ENCODE measurements at regions of chr5 and their contacts with region 1.

Region 1: DNA sequence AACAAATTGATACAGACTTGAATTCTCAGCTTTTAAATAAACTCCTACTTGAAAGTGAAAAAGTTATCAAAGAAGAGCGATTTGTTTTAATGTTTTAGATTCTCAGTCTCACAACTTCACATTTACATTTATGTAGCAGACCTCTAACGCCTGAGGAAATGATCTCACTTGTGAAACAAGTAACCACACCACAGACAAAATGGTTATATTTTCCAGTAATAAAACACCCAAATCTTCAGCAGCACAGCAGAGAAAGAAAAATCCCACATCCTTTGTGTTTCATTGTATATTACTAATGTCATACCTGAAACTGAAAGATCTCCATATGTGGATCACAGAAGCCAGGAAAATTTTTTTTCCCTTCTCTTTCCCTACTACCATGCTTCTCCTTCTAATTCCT is 29.8 kb upstream of the GZMA start:
- DNase-seq: no peak
- H3K4me3 Mint-ChIP-seq: no peak overlapping the region
- H3K27ac Mint-ChIP-seq: peak overlapping the region; percentile 34
- H3K4me1 Mint-ChIP-seq: peaks cover 33% of the 10 kb centered on the region
- H3K27me3 Mint-ChIP-seq: no peaks in the 10 kb centered on the region

Region 2: GRCh38 chr5:54310433-54311175 is 762.1 kb before region 1 on chr5 and contains the start of gene ARL15:
- CTCF ChIA-PET with region 1: no interaction called
- intact Hi-C with region 1: no loop called
- DNase-seq: peak; percentile 98
- H3K4me3 Mint-ChIP-seq: peak within 1 kb of the TSS; percentile 89
- H3K27ac Mint-ChIP-seq: peak within 1 kb of the TSS; percentile 84
- H3K4me1 Mint-ChIP-seq: peaks cover 24% of the 10 kb centered on the region
- H3K27me3 Mint-ChIP-seq: no peaks in the 10 kb centered on the region
- total RNA-seq, gene ARL15: 6.7 to 7.0 TPM

Region 3: DNA sequence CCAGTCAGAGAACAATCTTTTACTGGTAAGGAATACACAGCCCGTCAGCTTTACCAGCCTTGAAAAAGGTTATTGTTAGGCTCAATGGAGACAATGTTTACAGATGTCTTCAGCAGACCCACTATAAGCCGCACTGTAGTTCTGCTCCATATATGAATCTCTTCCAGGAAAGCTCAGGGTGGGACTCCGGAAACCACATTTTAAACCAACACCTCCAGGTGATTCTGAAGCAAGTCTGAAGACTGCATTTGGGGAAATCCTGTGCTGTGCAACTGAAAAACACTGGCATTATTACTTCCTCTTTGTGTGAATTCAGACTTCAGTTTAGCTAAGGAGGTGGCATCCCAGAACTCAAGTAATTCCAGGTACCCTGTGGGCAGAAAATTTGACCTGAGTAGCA is 45.1 kb before region 1 on chr5:
- CTCF ChIA-PET with region 1: no interaction called
- intact Hi-C with region 1: loop called (anchors 1 kb)
- DNase-seq: peak; percentile 68
- H3K4me3 Mint-ChIP-seq: no peak overlapping the region
- H3K27ac Mint-ChIP-seq: no peak overlapping the region
- H3K4me1 Mint-ChIP-seq: peaks cover 62% of the 10 kb centered on the region
- H3K27me3 Mint-ChIP-seq: peaks cover 3% of the 10 kb centered on the region

Region 4: GRCh38 chr5:55051357-55051756 is 21.3 kb before region 1 on chr5:
- CTCF ChIA-PET with region 1: no interaction called
- intact Hi-C with region 1: no loop called
- DNase-seq: no peak
- H3K4me3 Mint-ChIP-seq: no peak overlapping the region
- H3K27ac Mint-ChIP-seq: no peak overlapping the region
- H3K4me1 Mint-ChIP-seq: peaks cover 2% of the 10 kb centered on the region
- H3K27me3 Mint-ChIP-seq: no peaks in the 10 kb centered on the region

Region 5: DNA sequence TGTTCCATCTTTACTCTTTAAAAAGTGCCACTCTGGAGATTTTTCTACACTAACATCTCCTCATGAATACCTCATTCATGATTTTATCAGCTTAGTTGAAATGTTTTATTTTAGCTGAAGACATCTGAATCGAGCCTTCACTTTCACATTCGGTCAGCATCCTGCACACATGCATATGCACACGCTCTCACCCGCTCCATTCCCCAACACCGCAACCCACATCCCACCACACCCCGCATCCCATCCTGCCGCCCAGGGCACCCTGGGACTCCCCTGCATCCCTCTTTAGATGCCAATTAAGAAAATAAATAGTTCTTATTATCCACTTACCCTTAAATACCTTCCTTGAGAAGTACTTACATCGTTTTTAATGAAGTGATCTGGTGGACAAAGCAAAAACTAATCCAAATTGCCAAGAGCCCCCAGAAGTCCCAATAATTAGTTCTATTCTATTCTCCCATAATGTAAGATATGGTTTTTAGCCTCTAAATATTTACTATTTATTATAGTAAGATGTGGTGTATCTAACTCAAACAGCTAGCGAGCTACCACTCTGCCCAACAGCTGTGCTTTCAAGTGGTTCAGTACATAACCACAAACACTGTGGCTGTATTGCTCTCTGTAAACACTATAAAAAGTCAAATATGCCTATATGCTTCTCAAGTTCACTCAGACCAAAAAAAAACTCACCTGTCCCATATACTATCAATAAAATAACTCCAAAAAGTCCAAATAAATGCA is 10.5 kb before region 1 on chr5:
- CTCF ChIA-PET with region 1: interaction called, 5 read pairs
- intact Hi-C with region 1: loop called (anchors 1 kb)
- DNase-seq: peak; percentile 83
- H3K4me3 Mint-ChIP-seq: peak overlapping the region; percentile 51
- H3K27ac Mint-ChIP-seq: peak overlapping the region; percentile 46
- H3K4me1 Mint-ChIP-seq: peaks cover 41% of the 10 kb centered on the region
- H3K27me3 Mint-ChIP-seq: no peaks in the 10 kb centered on the region

Region 6: GRCh38 chr5:55096861-55097260 is 24.2 kb after region 1 on chr5:
- CTCF ChIA-PET with region 1: no interaction called
- intact Hi-C with region 1: loop called (anchors 1 kb)
- DNase-seq: peak; percentile 33
- H3K4me3 Mint-ChIP-seq: no peak overlapping the region
- H3K27ac Mint-ChIP-seq: no peak overlapping the region
- H3K4me1 Mint-ChIP-seq: peaks cover 66% of the 10 kb centered on the region
- H3K27me3 Mint-ChIP-seq: peaks cover 6% of the 10 kb centered on the region

Region 7: DNA sequence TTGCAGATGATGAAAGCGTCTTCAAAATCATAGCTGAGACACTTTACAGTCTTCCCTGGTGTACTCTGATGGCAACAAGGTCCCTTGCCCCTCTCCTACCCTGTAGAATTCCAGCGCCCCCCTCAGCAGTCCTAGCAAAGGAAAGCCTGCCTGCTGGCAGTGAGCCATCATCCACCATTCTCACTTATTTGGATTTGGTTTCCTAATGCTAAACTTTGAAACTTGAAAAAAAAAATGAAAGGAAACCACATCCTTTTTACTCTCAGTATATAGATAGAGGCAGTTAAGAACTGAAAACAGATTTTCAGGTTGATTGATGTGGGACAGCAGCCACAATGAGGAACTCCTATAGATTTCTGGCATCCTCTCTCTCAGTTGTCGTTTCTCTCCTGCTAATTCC is 29.7 kb after region 1 on chr5 and contains the start of gene GZMA:
- CTCF ChIA-PET with region 1: no interaction called
- intact Hi-C with region 1: loop called (anchors 1 kb)
- DNase-seq: peak; percentile 56
- H3K4me3 Mint-ChIP-seq: peak within 1 kb of the TSS; percentile 30
- H3K27ac Mint-ChIP-seq: no peak within 1 kb of the TSS
- H3K4me1 Mint-ChIP-seq: peaks cover 58% of the 10 kb centered on the region
- H3K27me3 Mint-ChIP-seq: peaks cover 9% of the 10 kb centered on the region
- total RNA-seq, gene GZMA: 0.24 TPM in 1 of 2 experiments, not detected in the other

Region 8: DNA sequence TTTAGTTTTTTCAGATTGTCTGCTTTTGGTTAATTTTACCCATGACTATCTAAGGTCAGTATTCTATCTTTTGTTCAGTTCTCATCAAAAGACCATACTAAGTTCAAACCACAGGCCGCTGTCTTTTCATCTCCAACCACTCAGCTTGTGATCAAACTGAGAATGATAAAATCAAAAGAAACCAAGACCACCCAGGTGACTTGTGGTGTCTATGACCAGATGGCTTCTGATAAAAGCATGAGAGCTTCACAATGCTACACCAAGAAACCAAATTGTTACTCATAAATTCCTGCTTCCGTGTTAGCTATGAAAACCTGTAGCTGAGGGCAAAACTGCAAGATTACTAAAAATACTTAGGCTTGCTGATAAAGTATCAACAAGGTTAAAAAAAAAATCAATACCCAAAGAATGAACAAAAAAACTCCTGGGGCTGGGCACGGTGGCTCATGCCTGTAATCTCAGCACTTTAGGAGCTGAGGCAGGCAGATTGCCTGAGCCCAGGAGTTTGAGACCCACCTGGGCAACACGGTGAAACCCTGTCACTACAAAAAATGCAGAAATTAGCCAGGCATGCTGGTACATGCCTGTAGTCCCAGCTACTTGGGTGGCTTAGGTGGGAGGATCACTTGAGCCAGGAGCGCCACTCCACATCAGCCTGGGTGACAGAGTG is 61.5 kb after region 1 on chr5:
- CTCF ChIA-PET with region 1: no interaction called
- intact Hi-C with region 1: loop called (anchors 2 kb)
- DNase-seq: peak; percentile 33
- H3K4me3 Mint-ChIP-seq: no peak overlapping the region
- H3K27ac Mint-ChIP-seq: no peak overlapping the region
- H3K4me1 Mint-ChIP-seq: peaks cover 12% of the 10 kb centered on the region
- H3K27me3 Mint-ChIP-seq: no peaks in the 10 kb centered on the region